Calu3 (cell line): ENCODE measurements at regions of chr2 and their contacts with region 1.

Region 1: DNA sequence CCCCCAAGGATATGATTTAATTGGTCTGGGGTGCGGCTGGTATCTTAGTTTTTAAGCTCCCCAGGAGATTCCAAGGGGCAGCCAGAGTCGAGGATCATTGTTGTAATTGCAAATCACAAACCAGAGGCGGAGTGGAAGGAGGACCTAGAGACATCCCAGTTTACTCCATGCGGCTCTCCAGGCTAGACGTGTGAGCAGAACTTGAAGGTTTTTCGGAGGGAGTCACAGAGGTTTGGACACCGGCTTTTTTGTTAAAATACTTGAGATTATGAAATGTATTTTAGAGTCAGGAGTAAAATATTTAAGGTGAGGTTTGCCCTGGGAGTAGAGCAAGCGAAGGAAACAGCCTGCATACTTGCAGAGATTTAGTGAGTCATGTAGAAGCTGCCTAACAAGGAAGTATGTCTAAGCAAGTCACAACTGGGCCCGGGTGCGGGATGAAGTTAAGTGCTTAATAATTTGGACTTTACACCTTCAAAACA is 39.5 kb downstream of the TGOLN2 start:
- DNase-seq: peak; percentile 74
- H3K4me3 Mint-ChIP-seq: peak overlapping the region; percentile 60
- H3K27ac Mint-ChIP-seq: peak overlapping the region; percentile 91
- H3K4me1 Mint-ChIP-seq: peaks cover 56% of the 10 kb centered on the region
- H3K27me3 Mint-ChIP-seq: no peaks in the 10 kb centered on the region
- CTCF ChIP-seq: no peak

Region 2: DNA sequence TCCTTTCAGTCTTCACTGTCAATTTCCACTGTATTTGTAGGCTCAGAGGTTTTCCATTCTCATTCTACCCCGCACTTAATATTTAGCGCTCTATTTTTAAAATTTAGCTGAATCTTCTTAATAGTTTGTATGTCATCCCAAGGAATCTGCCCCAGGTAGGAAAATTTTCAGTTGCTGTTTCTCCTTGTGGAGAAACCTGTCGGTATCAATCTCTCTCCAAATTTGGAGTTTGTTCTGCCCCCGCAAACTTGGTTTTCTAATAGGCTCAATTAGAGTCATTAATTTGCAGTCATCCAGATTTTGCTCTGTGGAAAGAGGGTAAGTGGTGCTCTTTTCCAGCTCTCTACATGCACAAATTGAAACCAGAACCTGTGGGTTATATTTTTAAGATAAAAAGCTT is 684.4 kb before region 1 on chr2:
- CTCF ChIA-PET with region 1: no interaction called
- intact Hi-C with region 1: no loop called
- DNase-seq: no peak
- H3K4me3 Mint-ChIP-seq: no peak overlapping the region
- H3K27ac Mint-ChIP-seq: no peak overlapping the region
- H3K4me1 Mint-ChIP-seq: no peaks in the 10 kb centered on the region
- H3K27me3 Mint-ChIP-seq: no peaks in the 10 kb centered on the region
- CTCF ChIP-seq: no peak

Region 3: GRCh38 chr2:85066874-85067351 is 221.4 kb before region 1 on chr2:
- CTCF ChIA-PET with region 1: interaction called, 17 read pairs
- intact Hi-C with region 1: loop called (anchors 1 kb)
- DNase-seq: peak; percentile 79
- H3K4me3 Mint-ChIP-seq: peak overlapping the region; percentile 18
- H3K27ac Mint-ChIP-seq: no peak overlapping the region
- H3K4me1 Mint-ChIP-seq: no peaks in the 10 kb centered on the region
- H3K27me3 Mint-ChIP-seq: no peaks in the 10 kb centered on the region
- CTCF ChIP-seq: peak; percentile 88

Region 4: DNA sequence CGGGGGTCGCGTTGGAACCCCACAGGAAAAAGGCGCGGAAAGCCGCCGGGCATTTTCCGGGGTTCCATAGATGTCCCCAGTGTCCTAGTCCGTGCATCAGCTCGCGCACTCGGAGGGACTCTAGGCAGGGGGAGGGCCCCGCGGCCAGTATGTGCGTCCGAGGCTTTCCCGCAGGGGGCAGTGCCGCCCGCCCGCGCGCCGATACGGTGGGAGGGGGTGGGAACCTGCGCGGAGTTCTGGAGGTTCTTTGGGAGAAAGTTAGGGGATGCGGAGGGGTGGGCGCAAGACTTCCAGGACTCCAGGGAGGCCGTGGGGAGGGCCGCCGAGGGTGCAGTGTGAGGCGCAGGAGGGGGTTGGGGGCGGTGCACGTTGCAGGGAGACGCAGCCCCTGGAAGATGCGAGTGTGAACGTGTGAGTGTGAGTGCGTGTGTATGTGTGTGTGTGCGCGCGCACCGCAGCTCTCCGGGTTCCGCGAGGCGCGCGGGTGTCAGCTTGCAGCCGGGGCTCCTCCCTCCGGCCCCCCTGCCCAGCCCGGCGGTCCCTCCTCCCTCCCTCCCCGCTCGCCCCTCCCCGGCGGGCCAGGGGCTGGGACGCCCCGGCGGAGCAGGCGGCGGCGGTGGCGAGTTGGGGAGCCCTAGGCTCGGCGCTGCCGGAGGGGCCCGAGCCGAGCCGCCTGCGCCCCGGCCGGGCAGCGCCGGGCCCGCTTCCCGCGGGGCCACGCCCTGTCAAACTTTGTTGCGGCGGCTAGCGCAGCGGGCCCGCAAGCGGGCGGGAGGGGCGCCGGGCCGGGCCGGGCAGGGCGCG is 155.2 kb before region 1 on chr2 and contains the start of gene TCF7L1:
- CTCF ChIA-PET with region 1: interaction called, 10 read pairs
- intact Hi-C with region 1: loop called (anchors 1 kb)
- DNase-seq: peak; percentile 86
- H3K4me3 Mint-ChIP-seq: peak within 1 kb of the TSS; percentile 81
- H3K27ac Mint-ChIP-seq: no peak within 1 kb of the TSS
- H3K4me1 Mint-ChIP-seq: no peaks in the 10 kb centered on the region
- H3K27me3 Mint-ChIP-seq: no peaks in the 10 kb centered on the region
- CTCF ChIP-seq: peak; percentile 89
- total RNA-seq, gene TCF7L1: 2.9 and 3.0 TPM in 2 replicates

Region 5: DNA sequence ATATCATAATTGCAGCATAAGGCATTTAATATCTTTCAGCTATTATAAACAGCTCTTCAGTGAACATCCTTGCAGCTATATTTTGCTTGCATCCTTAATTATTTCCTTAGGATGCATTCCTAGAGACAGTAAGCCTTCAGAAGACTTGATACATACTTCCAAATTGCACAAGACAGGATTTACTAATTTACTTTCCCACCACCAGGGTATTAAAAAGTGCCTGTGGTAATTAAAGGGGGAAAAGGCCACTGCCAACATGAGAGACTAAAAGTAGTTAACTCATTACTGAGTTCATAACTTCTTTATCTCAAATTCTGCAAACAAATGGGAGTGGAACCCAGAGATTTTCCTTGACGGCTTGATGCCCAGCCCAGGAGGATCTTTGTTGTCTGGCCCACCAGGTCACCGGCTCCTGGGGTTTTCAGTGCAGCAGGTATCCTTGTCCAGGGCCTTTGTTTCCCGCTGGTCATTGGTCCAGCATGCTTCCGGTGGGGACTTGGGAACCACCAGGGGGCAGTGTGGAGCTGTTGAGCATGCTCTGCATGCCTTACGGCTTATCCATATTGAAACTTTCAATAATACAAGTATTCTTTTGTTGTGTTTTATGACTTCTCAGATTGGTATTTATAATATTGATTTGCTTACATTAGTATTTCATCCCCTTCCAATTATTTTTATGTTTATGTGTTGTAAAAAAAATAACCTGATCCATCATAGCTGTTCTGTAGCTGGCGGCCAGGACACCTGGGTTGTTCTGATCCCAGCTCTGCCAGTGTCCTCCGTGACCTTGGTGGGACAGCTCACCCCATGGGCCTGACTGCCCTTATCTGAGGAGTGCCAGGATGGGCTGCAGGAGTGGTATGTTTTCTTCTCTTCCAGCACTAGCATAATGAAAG is 21.9 kb before region 1 on chr2:
- CTCF ChIA-PET with region 1: interaction called, 10 read pairs
- intact Hi-C with region 1: no loop called
- DNase-seq: peak; percentile 85
- H3K4me3 Mint-ChIP-seq: no peak overlapping the region
- H3K27ac Mint-ChIP-seq: no peak overlapping the region
- H3K4me1 Mint-ChIP-seq: peaks cover 9% of the 10 kb centered on the region
- H3K27me3 Mint-ChIP-seq: no peaks in the 10 kb centered on the region
- CTCF ChIP-seq: peak; percentile 96

Region 6: GRCh38 chr2:85302121-85302520 is 13.8 kb after region 1 on chr2:
- CTCF ChIA-PET with region 1: interaction called, 5 read pairs
- intact Hi-C with region 1: loop called (anchors 1 kb)
- DNase-seq: no peak
- H3K4me3 Mint-ChIP-seq: no peak overlapping the region
- H3K27ac Mint-ChIP-seq: no peak overlapping the region
- H3K4me1 Mint-ChIP-seq: peaks cover 6% of the 10 kb centered on the region
- H3K27me3 Mint-ChIP-seq: peaks cover 13% of the 10 kb centered on the region
- CTCF ChIP-seq: no peak

Region 7: DNA sequence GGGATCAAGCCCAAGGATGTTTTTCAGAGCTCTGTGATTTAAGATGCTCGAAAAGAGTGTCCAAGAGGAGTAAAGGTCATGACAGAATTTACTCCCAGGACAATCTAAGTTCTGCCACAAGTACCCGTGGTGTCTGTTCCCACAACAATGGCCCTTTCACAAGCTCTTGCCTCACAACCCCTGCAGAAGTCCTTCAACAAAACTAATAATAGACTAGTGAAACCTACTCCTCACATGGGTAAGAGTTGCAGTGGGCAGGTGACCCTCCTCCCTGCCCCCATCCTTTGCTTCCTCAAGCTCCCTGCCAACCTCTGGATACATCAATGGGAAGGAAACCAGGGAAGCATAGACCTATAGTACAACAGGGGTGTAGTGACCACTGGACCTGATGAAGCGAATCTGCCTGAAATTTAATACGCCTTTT is 852.7 kb after region 1 on chr2:
- CTCF ChIA-PET with region 1: no interaction called
- intact Hi-C with region 1: no loop called
- DNase-seq: no peak
- H3K4me3 Mint-ChIP-seq: no peak overlapping the region
- H3K27ac Mint-ChIP-seq: peak overlapping the region; percentile 50
- H3K4me1 Mint-ChIP-seq: no peaks in the 10 kb centered on the region
- H3K27me3 Mint-ChIP-seq: no peaks in the 10 kb centered on the region
- CTCF ChIP-seq: no peak